GM10248 (cell line): ENCODE measurements at regions of chr2 and their contacts with region 1.

Region 1: GRCh38 chr2:201795607-201796477 is 10.5 kb upstream of the CDK15 start:
- DNase-seq: peak; percentile 38
- CTCF ChIP-seq: peak; percentile 43

Region 2: GRCh38 chr2:201780674-201781581 is 14.9 kb before region 1 on chr2 and contains the start of gene ALS2:
- CTCF ChIA-PET with region 1: interaction called, 12 read pairs
- POLR2A ChIA-PET with region 1: no interaction called
- DNase-seq: peak; percentile 92
- CTCF ChIP-seq: no peak